ENCODE measurements at regions of chr6 and their contacts with region 1.

Region 1: GRCh38 chr6:85537055-85537494 is 56.6 kb downstream of the SNX14 start:
- DNase-seq: no peak
- ATAC-seq: no peak
- H3K4me3 ChIP-seq: no peak overlapping the region
- H3K27ac ChIP-seq: no peak overlapping the region
- H3K4me1 ChIP-seq: peaks cover 0 to 2% of the 10 kb centered on the region in 2 donors
- H3K27me3 ChIP-seq: no peaks in the 10 kb centered on the region

Region 2: DNA sequence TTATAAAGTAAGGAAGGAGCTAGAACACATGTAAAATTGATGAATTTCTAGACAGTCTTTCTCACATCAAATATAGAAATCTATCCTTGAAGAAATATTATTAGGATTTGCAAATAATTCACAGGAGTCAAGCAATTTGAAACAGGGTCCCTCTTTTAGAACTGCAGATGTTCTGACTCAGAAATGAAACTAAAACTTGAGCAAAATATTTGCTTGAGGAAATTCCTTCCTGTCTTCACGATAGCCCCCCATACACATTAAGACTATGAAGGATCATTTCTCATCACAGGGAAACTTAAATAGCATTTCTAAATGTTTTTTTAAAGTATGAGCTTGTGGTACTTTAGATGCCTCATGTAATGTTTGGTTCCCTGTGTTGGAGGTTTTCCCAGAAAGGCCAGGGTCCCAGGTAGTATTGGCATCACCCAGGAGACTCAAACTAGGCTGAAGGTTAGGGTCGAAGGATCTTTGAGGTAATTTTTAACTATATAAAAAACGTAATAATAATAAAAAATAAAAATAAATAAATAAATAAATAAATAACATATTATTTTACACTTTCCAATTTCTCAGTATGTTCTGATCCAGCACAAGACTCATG is 628.7 kb before region 1 on chr6:
- intact Hi-C with region 1: no loop called
- DNase-seq: no peak
- ATAC-seq: no peak
- H3K4me3 ChIP-seq: no peak overlapping the region
- H3K27ac ChIP-seq: no peak overlapping the region
- H3K4me1 ChIP-seq: no peaks in the 10 kb centered on the region
- H3K27me3 ChIP-seq: no peaks in the 10 kb centered on the region

Region 3: GRCh38 chr6:85354761-85355618 is 182.1 kb before region 1 on chr6:
- intact Hi-C with region 1: loop called in 1 of 2 experiments (anchors 5 kb)
- DNase-seq: peak; percentile 79 to 91
- ATAC-seq: peak; percentile 94
- H3K4me3 ChIP-seq: no peak overlapping the region
- H3K27ac ChIP-seq: no peak overlapping the region
- H3K4me1 ChIP-seq: no peaks in the 10 kb centered on the region
- H3K27me3 ChIP-seq: no peaks in the 10 kb centered on the region

Measured in aorta (tissue), 5 donors.